ENCODE measurements at regions of chr13 and their contacts with region 1.

Region 1: GRCh38 chr13:59677966-59678814 is 485.5 kb downstream of the DIAPH3 start:
- DNase-seq: peak in 1 of 4 donors; percentile 47
- ATAC-seq: peak; percentile 90
- H3K4me3 ChIP-seq: no peak overlapping the region
- H3K27ac ChIP-seq: peak overlapping the region in 1 of 2 donors; percentile 22
- H3K4me1 ChIP-seq: peaks cover 0 to 4% of the 10 kb centered on the region in 2 donors
- H3K27me3 ChIP-seq: no peaks in the 10 kb centered on the region
- CTCF ChIP-seq: peak; percentile 68 to 69

Region 2: DNA sequence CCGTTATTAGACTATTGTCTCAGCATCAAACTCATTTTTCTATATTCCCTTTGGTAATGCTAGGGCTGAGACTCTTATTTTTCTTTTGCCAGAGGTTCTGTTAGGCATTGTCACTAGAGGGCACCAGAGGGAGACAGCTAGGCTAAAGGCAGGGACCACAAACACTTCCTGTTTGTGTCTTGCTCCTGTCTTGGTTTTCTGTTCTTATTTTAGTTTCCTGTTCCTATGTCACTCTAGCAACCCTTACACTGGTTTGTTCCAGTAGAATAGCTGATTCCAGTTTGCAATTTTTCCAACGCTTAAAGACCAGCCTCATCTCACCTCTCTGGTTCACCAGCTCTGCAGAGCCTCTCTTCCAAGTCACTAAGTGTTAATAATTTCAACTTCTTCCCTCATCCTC is 286.5 kb before region 1 on chr13:
- intact Hi-C with region 1: loop called in 1 of 2 experiments (anchors 5 kb)
- DNase-seq: peak in 3 of 4 donors; percentile 35 to 76 (median 52)
- ATAC-seq: peak; percentile 97
- H3K4me3 ChIP-seq: no peak overlapping the region
- H3K27ac ChIP-seq: peak overlapping the region in 1 of 2 donors; percentile 42
- H3K4me1 ChIP-seq: peaks cover 0 to 3% of the 10 kb centered on the region in 2 donors
- H3K27me3 ChIP-seq: no peaks in the 10 kb centered on the region
- CTCF ChIP-seq: peak; percentile 69 to 75

Region 3: GRCh38 chr13:59771272-59771671 is 93.1 kb after region 1 on chr13:
- intact Hi-C with region 1: no loop called
- DNase-seq: peak in 1 of 4 donors; percentile 8
- ATAC-seq: peak; percentile 49
- H3K4me3 ChIP-seq: no peak overlapping the region
- H3K27ac ChIP-seq: no peak overlapping the region
- H3K4me1 ChIP-seq: peaks cover 0 to 3% of the 10 kb centered on the region in 2 donors
- H3K27me3 ChIP-seq: no peaks in the 10 kb centered on the region
- CTCF ChIP-seq: peak; percentile 32 to 38

Region 4: GRCh38 chr13:59906413-59907049 is 228.3 kb after region 1 on chr13:
- intact Hi-C with region 1: loop called in 1 of 2 experiments (anchors 10 kb)
- DNase-seq: peak in 1 of 4 donors; percentile 44
- ATAC-seq: peak; percentile 65
- H3K4me3 ChIP-seq: no peak overlapping the region
- H3K27ac ChIP-seq: no peak overlapping the region
- H3K4me1 ChIP-seq: no peaks in the 10 kb centered on the region
- H3K27me3 ChIP-seq: no peaks in the 10 kb centered on the region
- CTCF ChIP-seq: peak in 1 of 2 donors; percentile 45